ENCODE measurements at regions of chr1 and their contacts with region 1.

Region 1: GRCh38 chr1:187744665-187745064 is 915.9 kb downstream of the PLA2G4A start:
- DNase-seq: peak; percentile 36
- ATAC-seq: peak; percentile 98
- H3K4me3 ChIP-seq: no peak overlapping the region
- H3K27ac ChIP-seq: no peak overlapping the region
- H3K4me1 ChIP-seq: no peaks in the 10 kb centered on the region
- H3K27me3 ChIP-seq: no peaks in the 10 kb centered on the region
- CTCF ChIP-seq: no peak
- EP300 ChIP-seq: peak; percentile 14 to 34; a peak in 1 of 4 replicates
- POLR2A ChIP-seq: no peak
- RAD21 ChIP-seq: no peak

Region 2: GRCh38 chr1:187762118-187762517 is 17.5 kb after region 1 on chr1:
- CTCF ChIA-PET with region 1: no interaction called
- POLR2A ChIA-PET with region 1: no interaction called
- RAD21 ChIA-PET with region 1: no interaction called
- SMC1A ChIA-PET with region 1: no interaction called
- in situ Hi-C with region 1: no loop called
- intact Hi-C with region 1: loop called (anchors 2 kb)
- DNase-seq: no peak
- ATAC-seq: no peak
- H3K4me3 ChIP-seq: no peak overlapping the region
- H3K27ac ChIP-seq: no peak overlapping the region
- H3K4me1 ChIP-seq: no peaks in the 10 kb centered on the region
- H3K27me3 ChIP-seq: no peaks in the 10 kb centered on the region
- CTCF ChIP-seq: no peak
- EP300 ChIP-seq: no peak
- POLR2A ChIP-seq: no peak
- RAD21 ChIP-seq: no peak

Region 3: GRCh38 chr1:187773168-187773567 is 28.5 kb after region 1 on chr1:
- CTCF ChIA-PET with region 1: no interaction called
- POLR2A ChIA-PET with region 1: no interaction called
- RAD21 ChIA-PET with region 1: no interaction called
- SMC1A ChIA-PET with region 1: no interaction called
- in situ Hi-C with region 1: no loop called
- intact Hi-C with region 1: no loop called
- DNase-seq: no peak
- ATAC-seq: no peak
- H3K4me3 ChIP-seq: no peak overlapping the region
- H3K27ac ChIP-seq: no peak overlapping the region
- H3K4me1 ChIP-seq: no peaks in the 10 kb centered on the region
- H3K27me3 ChIP-seq: no peaks in the 10 kb centered on the region; a peak in 1 of 4 replicates
- CTCF ChIP-seq: no peak
- EP300 ChIP-seq: no peak
- POLR2A ChIP-seq: no peak
- RAD21 ChIP-seq: no peak

Measured in GM12878 (cell line).